T-cell (primary cell): ENCODE measurements at regions of chr5 and their contacts with region 1.

Region 1: DNA sequence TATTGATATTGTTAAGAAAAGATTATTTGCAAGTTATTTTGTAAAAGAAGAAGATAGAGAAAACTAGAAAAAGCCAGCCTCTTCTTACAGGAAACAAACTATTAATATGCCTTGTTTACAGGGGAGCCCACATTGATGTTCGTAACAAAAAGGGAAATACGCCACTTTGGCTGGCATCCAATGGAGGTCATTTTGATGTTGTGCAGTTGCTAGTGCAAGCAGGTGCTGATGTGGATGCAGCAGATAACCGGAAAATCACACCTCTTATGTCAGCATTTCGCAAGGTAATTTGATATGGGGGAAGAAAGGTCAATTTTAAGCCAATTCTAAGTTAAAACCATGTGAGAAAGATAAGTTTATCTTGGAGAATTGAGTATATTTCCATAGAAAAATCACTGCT is 37.6 kb upstream of the EIF4EBP3 start:
- DNase-seq: no peak
- ATAC-seq: no peak
- H3K4me3 ChIP-seq: no peak overlapping the region
- H3K4me3 Mint-ChIP-seq: no peak overlapping the region
- H3K27ac ChIP-seq: no peak overlapping the region
- H3K27ac Mint-ChIP-seq: no peak overlapping the region
- H3K4me1 ChIP-seq: no peaks in the 10 kb centered on the region
- H3K4me1 Mint-ChIP-seq: no peaks in the 10 kb centered on the region
- H3K27me3 ChIP-seq: no peaks in the 10 kb centered on the region
- H3K27me3 Mint-ChIP-seq: no peaks in the 10 kb centered on the region

Region 2: GRCh38 chr5:140488914-140489313 is 21.0 kb before region 1 on chr5:
- CTCF ChIA-PET with region 1: no interaction called
- POLR2A ChIA-PET with region 1: interaction called, 5 to 10 read pairs
- DNase-seq: no peak
- ATAC-seq: no peak
- H3K4me3 ChIP-seq: no peak overlapping the region
- H3K4me3 Mint-ChIP-seq: no peak overlapping the region
- H3K27ac ChIP-seq: no peak overlapping the region
- H3K27ac Mint-ChIP-seq: no peak overlapping the region
- H3K4me1 ChIP-seq: no peaks in the 10 kb centered on the region
- H3K4me1 Mint-ChIP-seq: peaks cover 0 to 2% (median 0%) of the 10 kb centered on the region in 3 donors
- H3K27me3 ChIP-seq: no peaks in the 10 kb centered on the region
- H3K27me3 Mint-ChIP-seq: no peaks in the 10 kb centered on the region

Region 3: GRCh38 chr5:140524003-140524402 is 14.1 kb after region 1 on chr5:
- CTCF ChIA-PET with region 1: no interaction called
- POLR2A ChIA-PET with region 1: no interaction called
- DNase-seq: no peak
- ATAC-seq: no peak
- H3K4me3 ChIP-seq: no peak overlapping the region
- H3K4me3 Mint-ChIP-seq: no peak overlapping the region
- H3K27ac ChIP-seq: no peak overlapping the region
- H3K27ac Mint-ChIP-seq: peak overlapping the region in 1 of 2 donors; percentile 47
- H3K4me1 ChIP-seq: no peaks in the 10 kb centered on the region
- H3K4me1 Mint-ChIP-seq: no peaks in the 10 kb centered on the region
- H3K27me3 ChIP-seq: no peaks in the 10 kb centered on the region
- H3K27me3 Mint-ChIP-seq: no peaks in the 10 kb centered on the region